Esophagus muscularis mucosa (tissue), 4 donors: ENCODE measurements at regions of chr11 and their contacts with region 1.

Region 1: GRCh38 chr11:108647701-108648527 is 17.0 kb upstream of the DDX10 start:
- DNase-seq: no peak
- H3K4me3 ChIP-seq: no peak overlapping the region
- H3K27ac ChIP-seq: no peak overlapping the region
- H3K4me1 ChIP-seq: peaks cover 0 to 7% (median 3%) of the 10 kb centered on the region in 4 donors
- H3K27me3 ChIP-seq: no peaks in the 10 kb centered on the region
- CTCF ChIP-seq: peak; percentile 59 to 79 (median 68)
- EP300 ChIP-seq: no peak
- POLR2A ChIP-seq: no peak

Region 2: GRCh38 chr11:108340970-108341369 is 306.9 kb before region 1 on chr11:
- intact Hi-C with region 1: loop called (anchors 10 kb)
- DNase-seq: no peak
- H3K4me3 ChIP-seq: no peak overlapping the region
- H3K27ac ChIP-seq: no peak overlapping the region
- H3K4me1 ChIP-seq: no peaks in the 10 kb centered on the region
- H3K27me3 ChIP-seq: no peaks in the 10 kb centered on the region
- CTCF ChIP-seq: no peak
- EP300 ChIP-seq: no peak
- POLR2A ChIP-seq: no peak